PC-3 (cell line): ENCODE measurements at regions of chr16 and their contacts with region 1.

Region 1: DNA sequence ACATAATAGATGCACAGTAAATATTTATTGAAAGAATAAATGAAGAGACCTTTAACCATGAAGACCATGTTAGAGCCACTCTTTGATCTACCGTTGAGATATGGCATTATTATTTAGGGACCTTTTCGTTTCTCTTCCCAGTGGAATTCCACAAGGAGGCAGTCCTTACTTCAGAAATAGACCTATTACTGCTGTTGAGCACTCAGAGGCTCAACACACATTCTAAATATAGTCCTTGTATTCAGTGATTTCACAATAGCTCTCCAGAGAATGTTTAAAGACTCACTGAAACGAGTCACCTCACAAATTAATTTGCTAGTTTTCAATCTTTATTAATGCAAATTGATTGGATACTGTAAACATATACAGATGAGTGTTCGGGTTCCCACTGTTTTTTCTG is 603.8 kb downstream of the CDH8 start:
- DNase-seq: peak; percentile 5
- ATAC-seq: no peak
- H3K4me3 ChIP-seq: no peak overlapping the region
- H3K27ac ChIP-seq: no peak overlapping the region
- H3K4me1 ChIP-seq: no peaks in the 10 kb centered on the region
- H3K27me3 ChIP-seq: no peaks in the 10 kb centered on the region
- CTCF ChIP-seq: peak; percentile 21; the same call in 1 of the 2 replicates

Region 2: DNA sequence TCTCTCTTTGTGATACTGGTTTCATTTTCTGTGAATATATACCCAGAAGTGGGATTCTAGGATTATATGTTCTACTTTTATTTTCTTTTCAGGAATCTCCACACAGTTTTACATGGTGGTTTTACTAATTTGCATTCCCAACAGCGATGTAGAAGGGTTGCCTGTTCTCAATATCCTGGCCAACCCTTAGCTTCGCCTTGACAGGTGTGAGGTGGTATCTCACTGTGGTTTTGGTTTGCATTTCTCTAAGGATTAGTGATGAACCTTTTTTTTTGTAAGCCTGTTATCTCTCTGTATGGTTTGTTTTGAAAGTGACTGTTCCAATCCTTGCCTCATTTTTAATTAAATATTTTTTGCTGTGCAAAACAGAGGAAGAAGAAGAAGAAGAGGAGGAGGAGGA is 333.9 kb before region 1 on chr16:
- CTCF ChIA-PET with region 1: no interaction called
- POLR2A ChIA-PET with region 1: interaction called, 27 read pairs
- intact Hi-C with region 1: no loop called
- DNase-seq: no peak
- ATAC-seq: no peak
- H3K4me3 ChIP-seq: no peak overlapping the region
- H3K27ac ChIP-seq: no peak overlapping the region
- H3K4me1 ChIP-seq: no peaks in the 10 kb centered on the region
- H3K27me3 ChIP-seq: no peaks in the 10 kb centered on the region
- CTCF ChIP-seq: no peak

Region 3: GRCh38 chr16:61460020-61460419 is 27.6 kb after region 1 on chr16:
- CTCF ChIA-PET with region 1: no interaction called
- POLR2A ChIA-PET with region 1: no interaction called
- intact Hi-C with region 1: no loop called
- DNase-seq: no peak
- ATAC-seq: no peak
- H3K4me3 ChIP-seq: no peak overlapping the region
- H3K27ac ChIP-seq: no peak overlapping the region
- H3K4me1 ChIP-seq: no peaks in the 10 kb centered on the region
- H3K27me3 ChIP-seq: no peaks in the 10 kb centered on the region
- CTCF ChIP-seq: no peak

Region 4: DNA sequence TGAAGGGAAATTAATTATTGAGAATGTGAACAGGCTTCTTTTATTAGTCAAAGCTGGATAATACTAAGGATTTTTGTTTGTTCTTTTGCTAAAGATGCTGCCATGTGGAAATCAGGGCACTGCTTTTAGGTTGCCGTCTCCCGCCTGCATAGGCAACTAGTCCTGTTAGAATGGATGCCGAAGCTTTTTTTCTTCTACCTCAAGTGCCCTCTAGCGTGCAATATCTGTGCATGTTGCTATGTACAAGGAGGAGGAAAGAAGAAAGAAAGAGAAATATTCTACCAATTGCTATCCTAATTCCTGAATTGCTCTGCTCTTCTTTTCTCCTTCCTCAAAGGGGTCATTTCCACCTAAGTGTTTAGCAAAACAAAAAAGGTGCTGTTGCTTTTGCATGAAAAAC is 609.0 kb after region 1 on chr16:
- CTCF ChIA-PET with region 1: no interaction called
- POLR2A ChIA-PET with region 1: no interaction called
- intact Hi-C with region 1: loop called (anchors 5 kb)
- DNase-seq: peak; percentile 68
- ATAC-seq: peak; percentile 83
- H3K4me3 ChIP-seq: no peak overlapping the region
- H3K27ac ChIP-seq: no peak overlapping the region
- H3K4me1 ChIP-seq: no peaks in the 10 kb centered on the region
- H3K27me3 ChIP-seq: no peaks in the 10 kb centered on the region; the same call in 1 of the 2 replicates
- CTCF ChIP-seq: peak; percentile 70

Region 5: GRCh38 chr16:62130101-62130500 is 697.7 kb after region 1 on chr16:
- CTCF ChIA-PET with region 1: no interaction called
- POLR2A ChIA-PET with region 1: no interaction called
- intact Hi-C with region 1: loop called (anchors 5 kb)
- DNase-seq: no peak
- ATAC-seq: no peak
- H3K4me3 ChIP-seq: no peak overlapping the region
- H3K27ac ChIP-seq: no peak overlapping the region
- H3K4me1 ChIP-seq: no peaks in the 10 kb centered on the region
- H3K27me3 ChIP-seq: no peaks in the 10 kb centered on the region
- CTCF ChIP-seq: no peak